ENCODE measurements at regions of chr7 and their contacts with region 1.

Region 1: DNA sequence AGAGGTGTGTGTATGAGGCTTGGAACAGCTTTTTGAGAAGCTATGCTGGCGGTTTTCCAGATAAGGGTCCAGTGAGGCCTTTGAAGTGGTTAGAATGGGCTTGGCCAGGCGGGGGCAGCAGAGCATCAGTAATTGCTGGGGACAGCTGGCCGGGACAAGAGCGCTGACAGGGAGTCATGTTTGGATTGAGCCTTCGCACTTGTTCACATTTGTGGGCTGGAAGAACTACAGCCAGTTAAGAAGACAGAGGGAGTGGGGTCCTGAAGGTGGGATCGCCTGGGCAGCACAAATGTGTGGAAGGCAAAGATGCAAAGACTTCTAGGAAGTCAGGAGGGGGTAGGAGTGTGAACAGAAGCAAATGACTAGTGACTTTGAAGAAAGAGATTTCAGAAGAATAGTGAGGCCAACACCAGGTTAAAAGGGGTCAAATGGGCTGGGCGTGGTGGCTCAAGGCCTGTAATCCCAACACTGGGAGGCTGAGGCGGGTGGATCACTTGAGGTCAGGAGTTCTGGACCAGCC is 12.7 kb upstream of the SDHAF3 start:
- DNase-seq: peak; percentile 79 to 92 (median 82)
- ATAC-seq: peak; percentile 100
- H3K4me3 ChIP-seq: no peak overlapping the region
- H3K27ac ChIP-seq: no peak overlapping the region
- H3K4me1 ChIP-seq: no peaks in the 10 kb centered on the region; a peak in 1 of 5 replicates
- H3K27me3 ChIP-seq: no peaks in the 10 kb centered on the region; a peak in 1 of 5 replicates
- CTCF ChIP-seq: peak; percentile 93 to 97 (median 94)
- EP300 ChIP-seq: no peak
- POLR2A ChIP-seq: no peak
- RAD21 ChIP-seq: peak; percentile 98

Region 2: GRCh38 chr7:97179454-97180104 is 74.8 kb after region 1 on chr7:
- CTCF ChIA-PET with region 1: interaction called, 34 read pairs
- POLR2A ChIA-PET with region 1: interaction called, 5 read pairs
- in situ Hi-C with region 1: no loop called
- intact Hi-C with region 1: loop called (anchors 1 kb)
- DNase-seq: peak; percentile 71 to 80 (median 76)
- ATAC-seq: peak; percentile 96
- H3K4me3 ChIP-seq: no peak overlapping the region
- H3K27ac ChIP-seq: no peak overlapping the region
- H3K4me1 ChIP-seq: no peaks in the 10 kb centered on the region
- H3K27me3 ChIP-seq: no peaks in the 10 kb centered on the region
- CTCF ChIP-seq: peak; percentile 70 to 82 (median 71)
- EP300 ChIP-seq: no peak
- POLR2A ChIP-seq: no peak
- RAD21 ChIP-seq: peak; percentile 62 to 65

Region 3: DNA sequence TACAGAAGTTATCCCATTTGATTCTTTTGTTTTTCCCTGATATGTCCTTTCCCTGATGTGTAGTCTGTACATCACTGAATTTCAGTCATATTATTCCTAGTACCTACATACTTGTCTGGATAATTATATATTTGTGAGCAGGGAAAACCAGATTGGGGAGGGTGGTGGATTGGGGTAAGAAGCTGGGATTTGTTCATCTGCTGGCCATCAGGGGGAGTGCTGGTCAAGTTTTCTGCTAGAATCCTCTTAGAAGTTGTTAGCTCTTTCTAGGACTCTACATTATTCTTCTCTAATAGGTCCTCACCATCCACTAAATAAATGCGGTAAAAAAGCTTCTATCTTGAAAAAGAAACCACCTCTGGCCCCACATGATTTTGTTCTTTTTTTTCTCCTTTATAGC is 394.4 kb after region 1 on chr7:
- CTCF ChIA-PET with region 1: no interaction called
- POLR2A ChIA-PET with region 1: no interaction called
- in situ Hi-C with region 1: no loop called
- intact Hi-C with region 1: loop called (anchors 2 kb)
- DNase-seq: peak; percentile 31 to 58 (median 44)
- ATAC-seq: peak; percentile 93
- H3K4me3 ChIP-seq: no peak overlapping the region
- H3K27ac ChIP-seq: no peak overlapping the region
- H3K4me1 ChIP-seq: no peaks in the 10 kb centered on the region
- H3K27me3 ChIP-seq: no peaks in the 10 kb centered on the region
- CTCF ChIP-seq: peak; percentile 55 to 80 (median 63)
- EP300 ChIP-seq: no peak
- POLR2A ChIP-seq: no peak
- RAD21 ChIP-seq: peak; percentile 62 to 64

Region 4: DNA sequence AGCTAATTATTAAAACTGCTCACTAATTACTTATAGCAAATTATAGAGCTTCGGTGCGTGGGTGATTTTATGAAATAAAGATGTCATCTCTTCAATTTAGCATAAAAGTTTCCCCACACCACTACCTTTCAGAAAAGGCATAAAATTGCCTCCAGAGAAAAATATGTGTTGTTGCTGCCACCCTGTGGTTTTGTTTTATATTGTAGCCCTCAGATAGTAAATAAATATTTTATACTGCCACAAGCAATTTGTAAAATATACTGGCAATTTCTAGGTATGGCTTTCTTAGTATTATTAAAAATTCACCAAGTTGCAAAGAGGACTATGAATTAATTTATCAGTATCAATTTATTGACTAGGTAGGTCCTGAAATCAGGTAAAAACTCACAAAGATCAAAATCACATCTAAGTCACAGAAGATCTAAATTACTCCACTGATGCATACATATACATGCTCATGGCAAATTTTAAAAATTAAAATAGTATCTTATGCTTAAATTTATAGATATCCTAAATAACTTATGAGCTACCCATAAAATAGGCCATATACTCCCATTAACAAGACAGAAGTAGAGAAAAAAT is 740.9 kb after region 1 on chr7:
- CTCF ChIA-PET with region 1: interaction called, 8 read pairs
- POLR2A ChIA-PET with region 1: no interaction called
- in situ Hi-C with region 1: no loop called
- intact Hi-C with region 1: loop called (anchors 2 kb)
- DNase-seq: peak in 2 of 4 experiments; percentile 19 to 47
- ATAC-seq: peak; percentile 59
- H3K4me3 ChIP-seq: no peak overlapping the region
- H3K27ac ChIP-seq: no peak overlapping the region
- H3K4me1 ChIP-seq: no peaks in the 10 kb centered on the region; a peak in 1 of 5 replicates
- H3K27me3 ChIP-seq: no peaks in the 10 kb centered on the region
- CTCF ChIP-seq: peak; percentile 27 to 65 (median 36); a peak in 3 of 6 replicates
- EP300 ChIP-seq: no peak
- POLR2A ChIP-seq: no peak
- RAD21 ChIP-seq: peak; percentile 49 to 62

Region 5: DNA sequence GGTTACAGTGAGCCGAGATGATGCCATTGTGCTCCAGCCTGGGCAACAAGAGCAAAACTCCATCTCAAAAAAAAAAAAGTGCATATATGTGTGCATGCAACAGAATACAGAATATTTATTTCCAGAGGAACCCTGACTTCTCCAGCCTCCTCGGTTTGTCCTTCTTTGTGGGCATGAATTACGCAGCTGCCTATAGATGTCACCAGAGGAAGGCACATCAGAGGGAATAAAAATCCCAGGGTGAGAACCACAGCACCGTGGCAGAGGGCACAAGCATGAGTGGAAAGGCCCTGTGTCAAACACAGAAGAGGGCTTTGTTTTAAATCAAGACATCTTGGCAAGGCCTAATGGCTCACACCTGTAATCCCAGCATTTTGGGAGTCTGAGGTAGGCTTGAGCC is 909.6 kb after region 1 on chr7:
- CTCF ChIA-PET with region 1: no interaction called
- POLR2A ChIA-PET with region 1: no interaction called
- in situ Hi-C with region 1: no loop called
- intact Hi-C with region 1: loop called (anchors 5 kb)
- DNase-seq: no peak
- ATAC-seq: no peak
- H3K4me3 ChIP-seq: no peak overlapping the region
- H3K27ac ChIP-seq: no peak overlapping the region
- H3K4me1 ChIP-seq: peaks cover 0 to 2% of the 10 kb centered on the region in 2 experiments; a peak in 2 of 5 replicates
- H3K27me3 ChIP-seq: peaks cover 3 to 27% of the 10 kb centered on the region in 2 experiments; a peak in 2 of 5 replicates
- CTCF ChIP-seq: no peak
- EP300 ChIP-seq: no peak
- POLR2A ChIP-seq: no peak
- RAD21 ChIP-seq: no peak